ENCODE measurements at regions of chr12 and their contacts with region 1.

Region 1: DNA sequence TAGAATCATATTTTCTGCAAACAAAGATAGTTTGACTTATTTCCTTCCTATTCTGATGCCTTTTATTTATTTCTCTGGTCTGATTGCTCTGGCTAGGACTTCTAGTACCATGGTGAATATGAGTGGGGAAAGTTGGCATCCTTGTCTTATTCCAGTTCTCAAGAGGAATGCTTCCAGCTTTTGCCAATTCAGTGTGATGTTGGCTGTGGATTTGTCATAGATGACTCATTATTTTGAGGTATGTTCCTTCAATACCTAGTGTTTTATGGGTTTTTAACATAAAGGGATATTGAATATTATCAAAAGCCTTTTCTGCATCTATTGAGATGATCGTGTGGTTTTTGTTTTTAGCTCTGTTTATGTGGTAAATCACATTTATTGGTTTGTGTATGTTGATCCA is 139.4 kb upstream of the CNTN1 start:
- DNase-seq: peak; percentile 77
- H3K4me3 ChIP-seq: no peak overlapping the region
- H3K27ac ChIP-seq: no peak overlapping the region
- H3K4me1 ChIP-seq: peaks cover 12% of the 10 kb centered on the region
- H3K27me3 ChIP-seq: no peaks in the 10 kb centered on the region
- CTCF ChIP-seq: no peak

Region 2: DNA sequence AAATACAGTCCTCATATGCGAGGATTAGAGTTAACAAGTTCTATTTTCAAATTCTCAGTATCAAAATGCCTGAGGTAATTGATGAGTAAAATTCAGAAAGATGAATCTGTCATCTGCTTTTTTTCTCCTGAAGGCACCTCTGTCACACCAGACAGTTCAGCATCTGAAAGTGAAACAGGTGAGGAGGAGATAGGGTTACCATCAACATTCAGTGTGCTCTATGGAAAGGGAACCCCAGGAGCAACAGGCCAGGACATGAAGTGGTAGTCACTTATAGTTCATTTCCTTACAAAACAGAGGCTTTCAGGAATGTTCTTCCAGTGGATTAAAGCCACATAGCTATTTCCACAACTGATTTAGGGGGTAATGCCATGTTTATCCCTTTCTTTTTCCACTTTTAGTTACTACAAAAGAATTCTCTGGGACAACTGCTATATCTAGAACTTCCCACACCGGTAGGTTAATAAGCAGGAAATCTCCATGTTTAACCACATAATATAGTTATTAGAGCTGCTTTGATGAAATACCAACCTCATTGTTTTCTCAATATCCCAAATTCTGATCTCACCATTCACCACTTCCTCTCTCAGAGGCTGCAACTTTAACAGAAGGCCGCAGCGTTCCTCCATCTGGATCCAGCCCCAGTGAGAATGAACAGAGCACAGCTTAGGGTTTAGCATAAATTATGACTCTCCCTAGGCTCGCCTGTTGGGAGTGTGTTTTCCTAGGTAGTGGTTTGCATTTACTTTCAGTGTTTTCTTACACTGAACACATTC is 37.6 kb before region 1 on chr12:
- CTCF ChIA-PET with region 1: no interaction called
- dilution Hi-C with region 1: loop called (anchors 5 kb)
- in situ Hi-C with region 1: no loop called
- intact Hi-C with region 1: no loop called
- DNase-seq: peak; percentile 65
- H3K4me3 ChIP-seq: no peak overlapping the region
- H3K27ac ChIP-seq: peak overlapping the region; percentile 61
- H3K4me1 ChIP-seq: peaks cover 25% of the 10 kb centered on the region
- H3K27me3 ChIP-seq: no peaks in the 10 kb centered on the region
- CTCF ChIP-seq: no peak

Measured in mammary epithelial cell (primary cell).